Heart left ventricle (tissue), 16 donors: ENCODE measurements at regions of chr6 and their contacts with region 1.

Region 1: GRCh38 chr6:11496152-11497060 is 41.1 kb upstream of the TMEM170B start:
- DNase-seq: peak in 4 of 5 donors; percentile 33 to 76 (median 61)
- ATAC-seq: peak; percentile 69 to 94 (median 90)
- H3K4me3 ChIP-seq: no peak overlapping the region
- H3K27ac ChIP-seq: peak overlapping the region in 4 of 12 donors; percentile 12 to 56 (median 38)
- H3K4me1 ChIP-seq: peaks cover 0 to 23% (median 6%) of the 10 kb centered on the region in 12 donors
- H3K27me3 ChIP-seq: no peaks in the 10 kb centered on the region
- CTCF ChIP-seq: peak; percentile 73 to 98 (median 92)
- POLR2A ChIP-seq: no peak

Region 2: GRCh38 chr6:11144393-11144851 is 352.0 kb before region 1 on chr6:
- intact Hi-C with region 1: loop called (anchors 1 to 2 kb)
- DNase-seq: peak; percentile 72 to 83 (median 74)
- ATAC-seq: peak; percentile 89 to 96 (median 92)
- H3K4me3 ChIP-seq: no peak overlapping the region
- H3K27ac ChIP-seq: no peak overlapping the region
- H3K4me1 ChIP-seq: peaks cover 0 to 18% (median 0%) of the 10 kb centered on the region in 12 donors
- H3K27me3 ChIP-seq: no peaks in the 10 kb centered on the region
- CTCF ChIP-seq: peak; percentile 78 to 96 (median 90)
- POLR2A ChIP-seq: no peak

Region 3: DNA sequence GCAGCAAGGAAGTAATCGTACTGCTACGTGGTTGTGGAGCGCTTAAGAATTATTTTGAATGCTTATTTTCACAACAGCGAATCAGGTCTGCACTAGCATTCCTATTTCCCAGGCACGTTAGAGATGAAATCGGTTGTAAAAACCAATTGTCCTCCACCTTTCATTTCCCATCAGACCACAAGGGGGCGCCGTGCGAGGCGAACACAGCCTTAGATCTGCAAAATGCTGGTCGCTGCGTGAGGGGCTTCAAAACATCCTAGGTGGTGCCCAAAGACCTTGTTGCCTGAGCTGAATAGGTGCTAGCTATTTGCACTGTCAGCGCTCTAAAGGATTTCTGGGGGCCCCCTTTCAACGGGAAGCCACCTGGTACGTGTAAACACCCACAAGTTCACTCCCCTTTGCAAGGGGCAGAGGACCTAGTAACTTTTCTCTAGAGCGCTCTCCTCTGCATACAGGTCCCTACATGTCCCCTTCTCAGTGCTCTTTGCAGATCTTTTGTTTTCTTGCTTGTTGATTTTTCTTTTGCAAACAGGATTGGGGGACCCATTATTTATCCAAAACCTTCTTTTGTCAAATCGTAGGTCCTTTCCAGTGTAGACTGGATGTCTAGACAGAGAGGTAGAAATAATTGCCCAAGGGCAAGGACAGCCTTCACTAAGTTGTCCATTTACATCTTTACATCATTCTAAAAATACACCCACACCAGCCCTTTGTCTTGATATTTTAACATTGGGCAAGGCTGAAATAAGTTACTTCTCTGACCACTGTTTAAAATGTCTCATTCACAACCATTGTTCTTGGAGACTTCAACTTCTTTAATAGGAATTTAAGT is 323.7 kb before region 1 on chr6:
- intact Hi-C with region 1: loop called in 8 of 10 experiments (anchors 1 to 10 kb)
- DNase-seq: peak; percentile 62 to 84 (median 66)
- ATAC-seq: peak in 2 of 4 donors; percentile 55 to 59
- H3K4me3 ChIP-seq: peak overlapping the region in 1 of 12 donors; percentile 11
- H3K27ac ChIP-seq: no peak overlapping the region
- H3K4me1 ChIP-seq: peaks cover 0 to 14% (median 6%) of the 10 kb centered on the region in 12 donors
- H3K27me3 ChIP-seq: no peaks in the 10 kb centered on the region
- CTCF ChIP-seq: peak; percentile 75 to 92 (median 90)
- POLR2A ChIP-seq: no peak

Region 4: GRCh38 chr6:11241793-11242201 is 254.6 kb before region 1 on chr6:
- intact Hi-C with region 1: loop called in 4 of 10 experiments (anchors 5 to 10 kb)
- DNase-seq: peak; percentile 48 to 79 (median 63)
- ATAC-seq: peak; percentile 80 to 97 (median 90)
- H3K4me3 ChIP-seq: no peak overlapping the region
- H3K27ac ChIP-seq: no peak overlapping the region
- H3K4me1 ChIP-seq: peaks cover 0 to 21% (median under 1%) of the 10 kb centered on the region in 12 donors
- H3K27me3 ChIP-seq: no peaks in the 10 kb centered on the region
- CTCF ChIP-seq: peak; percentile 20 to 82 (median 58)
- POLR2A ChIP-seq: no peak

Region 5: GRCh38 chr6:11374036-11375010 is 122.1 kb before region 1 on chr6:
- intact Hi-C with region 1: loop called in 1 of 10 experiments (anchors 5 kb)
- DNase-seq: no peak
- ATAC-seq: peak in 3 of 4 donors; percentile 41 to 76 (median 67)
- H3K4me3 ChIP-seq: no peak overlapping the region
- H3K27ac ChIP-seq: peak overlapping the region in 2 of 12 donors; percentile 20 to 69
- H3K4me1 ChIP-seq: peaks cover 0 to 73% (median 13%) of the 10 kb centered on the region in 12 donors
- H3K27me3 ChIP-seq: no peaks in the 10 kb centered on the region
- CTCF ChIP-seq: no peak
- POLR2A ChIP-seq: no peak

Region 6: DNA sequence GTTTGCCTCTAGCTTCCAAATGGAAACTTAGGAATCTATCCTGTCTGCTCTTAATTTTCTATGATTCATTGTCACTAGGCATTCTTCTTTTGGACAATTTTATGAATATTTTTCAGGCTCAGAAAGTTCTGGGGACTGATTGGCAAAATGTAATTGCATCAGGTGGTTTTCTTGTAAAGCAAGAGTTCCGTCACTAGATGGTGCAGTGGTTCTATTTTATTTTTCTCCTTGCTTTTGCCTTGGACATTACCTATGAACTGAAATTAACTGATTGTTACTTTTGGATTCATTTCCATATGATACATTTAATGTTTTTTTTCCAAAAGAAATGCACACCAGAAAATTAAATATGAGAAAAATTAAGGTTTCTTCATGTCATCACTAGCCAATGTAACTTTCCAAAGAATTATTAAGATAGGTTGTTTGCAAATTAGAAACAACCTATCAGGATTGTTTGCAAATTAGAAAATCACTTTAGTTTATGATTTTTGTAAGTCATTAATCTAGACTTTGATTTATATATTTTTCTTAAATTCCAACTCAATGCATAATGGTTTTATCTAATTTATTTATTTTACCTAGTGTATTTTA is 89.1 kb after region 1 on chr6:
- intact Hi-C with region 1: no loop called
- DNase-seq: no peak
- ATAC-seq: peak in 1 of 4 donors; percentile 41
- H3K4me3 ChIP-seq: no peak overlapping the region
- H3K27ac ChIP-seq: no peak overlapping the region
- H3K4me1 ChIP-seq: peaks cover 0 to 5% (median 0%) of the 10 kb centered on the region in 12 donors
- H3K27me3 ChIP-seq: no peaks in the 10 kb centered on the region
- CTCF ChIP-seq: peak; percentile 47 to 75 (median 70)
- POLR2A ChIP-seq: no peak